WTC11 (cell line): ENCODE measurements at regions of chr16 and their contacts with region 1.

Region 1: DNA sequence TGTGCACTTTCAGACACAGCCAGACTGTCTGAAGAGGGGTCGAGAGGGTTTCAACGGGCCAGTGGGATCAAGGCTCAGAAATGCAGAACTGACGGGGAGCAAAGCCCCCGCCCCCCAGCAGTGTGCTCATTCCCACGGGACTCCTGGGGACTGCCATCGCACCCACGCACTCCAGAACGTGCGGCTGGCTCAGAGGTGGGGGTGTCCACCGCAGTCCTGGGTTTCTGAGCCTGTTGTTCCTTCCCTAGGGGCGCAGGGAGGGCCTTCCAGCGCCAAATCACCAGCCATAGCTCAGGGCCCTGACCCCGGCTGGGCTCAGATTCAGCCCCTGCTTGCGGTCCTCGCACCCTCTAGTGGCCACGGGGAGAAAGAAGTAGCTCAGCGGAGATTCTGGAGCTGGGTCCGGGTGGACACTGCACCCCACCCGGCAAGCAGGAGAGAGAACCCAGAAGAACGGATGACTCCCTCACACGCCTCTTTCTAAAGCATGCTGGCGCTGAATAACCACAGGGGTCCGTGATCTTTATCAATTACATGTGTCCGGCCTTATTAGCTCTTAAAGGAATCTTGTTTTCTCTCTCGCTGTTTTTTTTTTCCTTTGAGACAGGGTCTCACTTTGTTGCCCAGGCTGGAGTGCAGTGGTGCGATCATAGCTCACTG is 45.0 kb upstream of the USP7 start:
- DNase-seq: peak; percentile 92
- ATAC-seq: peak; percentile 88
- H3K4me3 Mint-ChIP-seq: peak overlapping the region; percentile 25; the same call in 1 of the 2 replicates
- H3K27ac Mint-ChIP-seq: no peak overlapping the region
- H3K4me1 Mint-ChIP-seq: peaks cover 6% of the 10 kb centered on the region
- H3K27me3 Mint-ChIP-seq: no peaks in the 10 kb centered on the region; the same call in none of the 2 replicates
- CTCF ChIP-seq: peak; percentile 80

Region 2: DNA sequence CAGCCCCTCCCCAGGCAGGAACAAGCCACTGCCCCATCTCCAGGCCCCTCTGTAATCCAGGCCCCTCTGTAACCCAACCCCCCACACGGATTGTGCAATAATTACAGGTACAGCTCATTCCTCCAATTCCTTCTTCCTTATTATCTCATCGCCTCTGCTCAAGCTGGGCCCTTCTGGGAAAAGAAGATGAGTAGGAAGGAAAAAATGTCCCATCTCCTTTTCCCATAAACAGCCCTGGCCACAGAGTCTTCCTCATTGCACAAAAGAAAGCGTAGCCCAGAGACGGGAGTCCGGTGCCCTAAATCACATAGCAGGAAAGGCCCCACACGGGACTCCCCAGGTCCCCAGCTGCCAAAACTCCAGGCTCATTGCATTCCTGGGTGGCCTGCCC is 130.2 kb before region 1 on chr16:
- CTCF ChIA-PET with region 1: interaction called, 36 read pairs
- POLR2A ChIA-PET with region 1: no interaction called
- DNase-seq: no peak
- ATAC-seq: no peak
- H3K4me3 Mint-ChIP-seq: no peak overlapping the region
- H3K27ac Mint-ChIP-seq: 0 out of 2 replicates have a peak overlapping the region, but pooled peaks have one; percentile 93
- H3K4me1 Mint-ChIP-seq: peaks cover 13% of the 10 kb centered on the region
- H3K27me3 Mint-ChIP-seq: no peaks in the 10 kb centered on the region
- CTCF ChIP-seq: no peak

Region 3: GRCh38 chr16:8914098-8914497 is 94.6 kb before region 1 on chr16:
- CTCF ChIA-PET with region 1: interaction called, 16 read pairs
- POLR2A ChIA-PET with region 1: no interaction called
- DNase-seq: no peak
- ATAC-seq: no peak
- H3K4me3 Mint-ChIP-seq: no peak overlapping the region
- H3K27ac Mint-ChIP-seq: no peak overlapping the region
- H3K4me1 Mint-ChIP-seq: peaks cover 25% of the 10 kb centered on the region
- H3K27me3 Mint-ChIP-seq: no peaks in the 10 kb centered on the region
- CTCF ChIP-seq: no peak

Region 4: DNA sequence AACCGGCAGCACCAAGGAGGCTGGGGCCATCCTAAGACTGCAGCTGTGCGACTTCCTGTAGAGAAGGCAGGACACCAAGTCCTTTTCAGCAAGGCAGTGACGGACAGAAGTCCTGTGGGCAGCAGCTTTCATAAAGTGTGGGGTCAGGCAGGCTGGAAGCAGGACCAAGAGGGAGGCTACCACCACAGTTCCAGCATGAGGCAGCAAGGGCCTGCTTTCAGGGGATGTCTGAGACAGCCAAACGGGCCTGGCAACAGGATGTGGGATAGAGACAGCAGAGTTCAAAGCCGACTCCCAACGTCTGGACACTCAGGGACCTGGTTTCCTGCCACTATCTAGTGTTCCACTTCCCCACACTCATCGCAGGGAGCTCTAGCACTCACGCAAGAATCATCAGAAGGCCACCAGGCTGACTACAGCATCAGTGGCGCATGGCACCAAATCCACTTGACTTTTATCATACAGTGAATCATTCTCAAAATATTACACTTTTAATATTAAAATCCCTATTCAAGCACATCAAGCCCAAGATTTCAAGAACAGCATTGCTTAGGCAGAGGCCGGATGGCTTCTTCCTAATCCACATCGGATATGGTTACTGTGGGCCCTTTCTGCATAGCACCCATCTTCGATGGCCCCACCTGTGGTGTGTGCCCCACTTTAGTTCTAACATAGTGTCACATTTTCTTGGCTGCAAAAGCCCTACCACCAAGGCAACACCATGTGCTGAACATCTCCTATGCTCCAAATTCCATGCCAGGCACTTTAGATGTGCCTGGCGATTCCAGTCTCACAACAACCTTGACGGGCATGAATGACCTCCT is 50.2 kb before region 1 on chr16:
- CTCF ChIA-PET with region 1: interaction called, 34 read pairs
- POLR2A ChIA-PET with region 1: no interaction called
- DNase-seq: no peak
- ATAC-seq: peak; percentile 7
- H3K4me3 Mint-ChIP-seq: peak overlapping the region; percentile 15; the same call in 1 of the 2 replicates
- H3K27ac Mint-ChIP-seq: peak overlapping the region; percentile 69
- H3K4me1 Mint-ChIP-seq: peaks cover 76% of the 10 kb centered on the region
- H3K27me3 Mint-ChIP-seq: no peaks in the 10 kb centered on the region
- CTCF ChIP-seq: no peak

Region 5: DNA sequence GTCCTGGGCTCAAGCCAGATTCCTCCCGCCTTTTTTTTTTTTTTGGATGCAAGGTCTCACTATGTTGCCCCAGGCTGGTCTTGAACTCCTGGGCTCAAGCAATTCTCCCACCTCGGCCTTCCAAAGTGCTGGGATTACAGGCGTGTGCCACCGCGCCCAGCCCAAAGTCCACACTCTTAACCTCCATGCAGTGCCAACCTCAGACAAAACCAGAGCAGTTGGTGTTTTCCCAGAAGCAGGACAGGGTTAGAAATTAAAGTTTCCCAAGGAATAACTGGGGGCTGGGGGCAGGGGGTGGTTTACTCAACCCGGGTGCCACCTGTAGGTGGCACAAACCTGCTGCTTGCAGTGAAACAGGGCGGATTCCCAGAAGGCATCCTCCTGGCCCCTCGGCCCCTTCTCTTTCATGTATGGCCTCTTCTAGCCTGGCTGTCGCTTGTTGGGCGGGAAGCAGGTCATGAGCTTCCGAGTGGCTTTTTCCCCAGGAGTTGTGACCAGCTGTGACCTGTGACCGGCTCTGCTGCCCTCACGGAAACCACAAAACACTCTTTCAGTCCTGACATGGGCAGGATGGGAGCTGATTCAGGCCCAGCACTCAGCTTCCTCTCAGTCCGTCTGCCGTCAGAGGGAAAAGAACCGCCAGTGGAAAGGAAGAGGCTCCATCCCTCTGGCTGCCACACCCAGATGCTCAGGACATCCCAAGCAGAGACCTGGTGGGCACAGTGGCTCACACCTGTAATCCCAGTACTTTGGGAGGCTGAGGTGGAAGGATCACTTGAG is 19.4 kb before region 1 on chr16:
- CTCF ChIA-PET with region 1: interaction called, 72 read pairs
- POLR2A ChIA-PET with region 1: no interaction called
- DNase-seq: no peak
- ATAC-seq: no peak
- H3K4me3 Mint-ChIP-seq: no peak overlapping the region
- H3K27ac Mint-ChIP-seq: no peak overlapping the region; the same call in 1 of the 2 replicates
- H3K4me1 Mint-ChIP-seq: peaks cover 30% of the 10 kb centered on the region
- H3K27me3 Mint-ChIP-seq: peaks cover 15% of the 10 kb centered on the region
- CTCF ChIP-seq: no peak

Region 6: DNA sequence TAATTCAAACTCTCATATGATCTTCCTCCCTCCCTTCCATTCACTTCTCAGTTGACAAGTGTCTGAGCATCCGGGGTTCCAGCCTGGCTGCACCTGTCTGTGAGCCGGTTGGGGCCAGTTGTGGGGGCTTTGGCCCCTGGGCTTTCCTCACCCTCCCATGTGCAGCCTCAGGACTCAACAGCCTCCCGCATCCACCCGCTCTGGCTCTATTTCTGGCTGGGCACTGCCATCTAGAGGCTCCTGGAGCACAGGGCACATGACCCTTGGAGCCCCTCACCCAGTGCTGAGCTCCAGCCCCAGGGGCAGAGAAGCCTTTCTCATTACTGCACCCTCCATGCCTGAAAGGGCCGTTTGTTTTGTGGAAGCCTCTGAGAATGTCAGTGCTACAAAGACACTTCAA is 126.0 kb after region 1 on chr16:
- CTCF ChIA-PET with region 1: interaction called, 22 read pairs
- POLR2A ChIA-PET with region 1: no interaction called
- DNase-seq: peak; percentile 80
- ATAC-seq: peak; percentile 84
- H3K4me3 Mint-ChIP-seq: no peak overlapping the region
- H3K27ac Mint-ChIP-seq: no peak overlapping the region
- H3K4me1 Mint-ChIP-seq: peaks cover 17% of the 10 kb centered on the region
- H3K27me3 Mint-ChIP-seq: no peaks in the 10 kb centered on the region
- CTCF ChIP-seq: peak; percentile 24; the same call in 1 of the 2 replicates

Region 7: DNA sequence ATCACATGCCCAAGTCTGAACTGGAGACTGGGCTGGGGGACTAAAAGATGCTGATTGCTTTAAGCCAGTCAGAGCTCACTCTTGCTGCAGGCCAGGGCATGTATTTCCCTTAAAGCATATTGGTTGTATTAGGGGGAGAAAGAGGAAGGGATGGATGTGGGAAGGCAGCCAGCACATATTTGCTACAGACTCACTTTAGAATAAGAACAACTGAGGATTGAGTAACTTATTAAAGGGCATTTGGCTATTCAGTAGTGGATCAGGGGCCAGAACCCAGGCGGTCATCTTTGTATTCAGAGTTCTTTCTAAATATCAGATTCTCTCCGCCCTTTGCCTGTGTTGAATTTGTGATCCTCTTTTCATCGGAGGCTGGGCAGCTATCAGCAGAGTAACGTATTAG is 314.4 kb after region 1 on chr16:
- CTCF ChIA-PET with region 1: no interaction called
- POLR2A ChIA-PET with region 1: no interaction called
- DNase-seq: no peak
- ATAC-seq: peak; percentile 38
- H3K4me3 Mint-ChIP-seq: no peak overlapping the region
- H3K27ac Mint-ChIP-seq: no peak overlapping the region
- H3K4me1 Mint-ChIP-seq: peaks cover 21% of the 10 kb centered on the region
- H3K27me3 Mint-ChIP-seq: no peaks in the 10 kb centered on the region; the same call in 1 of the 2 replicates
- CTCF ChIP-seq: no peak